K562 (cell line): ENCODE measurements at regions of chr17 and their contacts with region 1.

Region 1: DNA sequence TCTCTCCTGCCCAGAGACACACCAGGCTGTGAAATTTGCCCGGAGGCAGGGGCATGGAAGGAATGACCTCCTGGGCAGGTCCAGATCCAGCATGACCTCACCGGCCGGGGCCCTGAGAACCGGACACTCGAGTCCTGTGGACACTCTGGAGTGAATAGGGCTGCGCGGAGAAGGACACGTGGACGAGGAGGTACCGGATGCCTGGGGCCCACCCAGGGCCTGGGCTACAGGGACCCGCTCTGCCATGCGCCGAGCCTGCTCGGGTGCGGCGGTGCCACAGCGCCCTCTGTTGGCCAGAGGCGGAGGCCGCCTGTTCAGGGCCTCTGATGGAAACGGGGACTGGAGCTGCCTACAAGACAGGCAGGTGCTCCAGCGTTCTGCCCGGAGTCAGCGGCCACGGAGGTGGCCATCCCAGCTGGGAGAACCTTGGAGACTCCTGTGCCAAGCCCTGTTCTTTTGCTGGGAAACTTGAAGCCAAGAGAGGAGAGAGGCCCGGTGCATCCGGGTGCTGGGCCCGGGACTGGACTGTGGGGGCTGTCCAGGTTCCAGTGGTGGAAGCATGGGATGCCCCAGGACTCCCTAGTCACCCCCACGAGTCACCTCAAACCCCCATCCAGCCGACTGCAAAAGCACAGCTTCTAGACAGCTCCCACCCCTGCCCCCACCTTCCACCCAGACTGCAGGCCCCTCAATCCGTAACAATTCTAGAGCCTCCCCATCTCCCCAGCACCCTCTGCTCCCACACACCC is 19.3 kb upstream of the NXPH3 start:
- DNase-seq: peak; percentile 83 to 91 (median 90)
- ATAC-seq: peak; percentile 99
- H3K4me3 ChIP-seq: no peak overlapping the region
- H3K27ac ChIP-seq: no peak overlapping the region
- H3K4me1 ChIP-seq: peaks cover 0 to 14% of the 10 kb centered on the region in 2 experiments; a peak in 3 of 5 replicates
- H3K27me3 ChIP-seq: peaks cover 0 to 6% of the 10 kb centered on the region in 2 experiments; a peak in 2 of 5 replicates
- CTCF ChIP-seq: peak; percentile 96 to 97 (median 96)
- EP300 ChIP-seq: no peak
- POLR2A ChIP-seq: no peak
- RAD21 ChIP-seq: peak; percentile 83 to 97

Region 2: DNA sequence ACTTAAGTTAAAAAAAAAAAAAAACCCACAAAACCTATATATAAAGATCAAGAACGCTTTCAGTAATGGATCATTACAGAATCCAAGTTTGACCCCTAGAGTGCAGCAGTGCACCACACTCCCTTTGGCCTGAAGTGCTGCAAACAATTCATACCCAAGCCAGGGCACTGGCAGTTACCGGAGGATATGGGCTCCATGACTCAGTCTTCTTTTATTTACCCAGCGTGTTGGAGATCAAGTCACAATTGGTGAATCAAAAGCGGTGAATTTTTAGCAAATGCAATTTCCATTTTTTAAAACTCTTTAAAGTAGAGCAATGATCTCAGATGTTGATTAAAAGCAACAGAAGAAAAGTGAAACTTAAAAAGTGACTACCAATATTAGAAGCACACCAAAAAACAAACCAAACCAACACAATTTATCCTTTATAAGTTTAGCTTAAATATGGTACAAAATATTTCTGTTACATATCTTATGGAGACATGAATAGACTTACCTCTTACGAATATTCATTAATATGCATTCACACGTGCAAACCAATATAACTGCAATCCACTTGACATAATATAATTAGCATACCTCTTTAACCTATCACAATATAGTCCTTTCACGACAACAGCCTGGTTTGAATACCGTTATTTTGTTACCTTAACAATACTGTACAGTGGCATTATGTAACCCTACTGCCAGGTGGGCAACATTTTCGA is 240.7 kb before region 1 on chr17:
- CTCF ChIA-PET with region 1: interaction called, 11 read pairs
- POLR2A ChIA-PET with region 1: no interaction called
- in situ Hi-C with region 1: no loop called
- intact Hi-C with region 1: loop called (anchors 5 kb)
- DNase-seq: peak; percentile 58 to 75 (median 64)
- ATAC-seq: peak; percentile 93
- H3K4me3 ChIP-seq: no peak overlapping the region
- H3K27ac ChIP-seq: no peak overlapping the region
- H3K4me1 ChIP-seq: no peaks in the 10 kb centered on the region
- H3K27me3 ChIP-seq: no peaks in the 10 kb centered on the region
- CTCF ChIP-seq: peak; percentile 73 to 93 (median 80)
- EP300 ChIP-seq: 0 out of 2 replicates have a peak, but pooled peaks have one; percentile 3
- POLR2A ChIP-seq: no peak
- RAD21 ChIP-seq: peak; percentile 90 to 94

Region 3: DNA sequence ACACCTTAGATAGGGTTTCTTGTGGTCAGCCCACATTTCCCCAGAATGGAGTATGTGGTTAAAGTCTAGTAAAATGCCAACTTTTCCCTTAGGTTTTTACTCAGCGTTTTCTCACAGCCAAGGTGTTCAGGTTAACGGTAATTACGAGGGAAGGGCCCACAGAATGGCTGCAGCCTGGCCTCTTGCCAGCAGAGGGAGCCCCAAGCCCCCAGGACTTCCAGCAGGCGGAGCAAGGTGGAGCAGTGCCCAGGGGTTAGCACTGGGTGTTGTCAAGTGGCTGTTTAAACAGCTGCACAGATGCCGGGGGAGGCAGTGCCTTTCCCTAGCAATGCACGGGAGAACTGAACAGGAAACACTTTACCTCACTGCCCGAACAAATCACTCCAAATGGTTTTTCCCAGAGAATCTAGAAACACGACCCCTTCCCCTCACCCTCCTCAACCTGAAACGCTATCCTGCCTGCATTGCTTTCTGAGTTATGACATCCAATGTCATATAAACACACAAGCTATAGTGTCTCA is 148.4 kb before region 1 on chr17:
- CTCF ChIA-PET with region 1: interaction called, 29 read pairs
- POLR2A ChIA-PET with region 1: interaction called, 4 read pairs
- in situ Hi-C with region 1: loop called (anchors 5 kb)
- intact Hi-C with region 1: loop called (anchors 1 kb)
- DNase-seq: peak; percentile 81 to 85 (median 84)
- ATAC-seq: peak; percentile 100
- H3K4me3 ChIP-seq: no peak overlapping the region
- H3K27ac ChIP-seq: no peak overlapping the region
- H3K4me1 ChIP-seq: no peaks in the 10 kb centered on the region
- H3K27me3 ChIP-seq: no peaks in the 10 kb centered on the region
- CTCF ChIP-seq: peak; percentile 97 to 99 (median 98)
- EP300 ChIP-seq: no peak
- POLR2A ChIP-seq: no peak
- RAD21 ChIP-seq: peak; percentile 94 to 95

Region 4: DNA sequence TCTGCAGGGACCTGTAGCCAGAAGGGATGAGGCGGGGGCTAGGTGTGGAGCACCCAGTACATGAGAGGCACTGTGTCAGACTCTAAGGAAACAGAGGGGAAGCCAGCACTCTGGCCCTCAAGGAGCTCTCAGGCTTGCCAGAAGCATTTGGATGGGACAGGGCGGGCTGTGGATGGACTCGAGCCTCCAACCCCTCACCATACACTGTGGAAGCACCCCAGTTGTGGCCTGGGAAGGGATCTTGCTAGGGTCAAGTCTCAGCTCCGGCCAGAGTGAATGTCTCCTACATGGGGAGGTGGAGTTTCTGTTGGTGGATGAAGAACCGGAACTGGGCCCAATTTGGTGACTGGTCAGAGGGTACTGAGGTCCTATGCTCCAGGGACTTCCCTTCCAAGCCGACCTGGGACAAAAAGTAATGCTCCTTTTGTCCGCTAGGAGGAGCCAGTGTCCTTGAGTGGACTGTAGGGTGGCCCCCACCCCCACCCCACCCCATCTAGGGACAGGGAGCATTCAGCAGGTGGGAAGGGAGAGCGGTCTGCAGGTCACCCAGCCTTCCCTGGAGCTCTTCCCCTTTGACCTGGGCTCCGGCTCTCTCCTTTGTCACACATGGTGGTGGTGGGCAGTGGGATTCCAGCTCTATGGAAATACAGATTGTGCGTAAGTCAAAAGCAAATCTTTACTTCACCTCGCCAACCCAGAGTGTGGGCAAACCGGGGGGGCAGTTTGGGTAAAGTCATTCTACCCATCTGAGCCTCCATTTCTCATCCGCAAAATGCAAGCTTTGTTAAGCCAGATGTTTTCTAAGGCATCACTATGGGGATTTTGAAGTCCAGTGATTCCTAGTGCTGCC is 121.4 kb before region 1 on chr17:
- CTCF ChIA-PET with region 1: interaction called, 11 read pairs
- POLR2A ChIA-PET with region 1: interaction called, 4 read pairs
- in situ Hi-C with region 1: loop called (anchors 5 kb)
- intact Hi-C with region 1: no loop called
- DNase-seq: peak; percentile 82 to 96 (median 92)
- ATAC-seq: peak; percentile 98
- H3K4me3 ChIP-seq: no peak overlapping the region
- H3K27ac ChIP-seq: no peak overlapping the region
- H3K4me1 ChIP-seq: peaks cover 0 to 5% of the 10 kb centered on the region in 2 experiments; a peak in 1 of 5 replicates
- H3K27me3 ChIP-seq: peaks cover 21 to 42% of the 10 kb centered on the region in 2 experiments; a peak in 4 of 5 replicates
- CTCF ChIP-seq: peak; percentile 75 to 82 (median 80)
- EP300 ChIP-seq: no peak
- POLR2A ChIP-seq: no peak
- RAD21 ChIP-seq: peak; percentile 44 to 71

Region 5: GRCh38 chr17:49496183-49496866 is 60.1 kb before region 1 on chr17:
- CTCF ChIA-PET with region 1: interaction called, 10 read pairs
- POLR2A ChIA-PET with region 1: no interaction called
- in situ Hi-C with region 1: no loop called
- intact Hi-C with region 1: no loop called
- DNase-seq: peak; percentile 76 to 83 (median 80)
- ATAC-seq: peak; percentile 94
- H3K4me3 ChIP-seq: no peak overlapping the region
- H3K27ac ChIP-seq: no peak overlapping the region
- H3K4me1 ChIP-seq: peaks cover 0 to 31% of the 10 kb centered on the region in 2 experiments; a peak in 2 of 5 replicates
- H3K27me3 ChIP-seq: peaks cover 30 to 62% of the 10 kb centered on the region in 2 experiments
- CTCF ChIP-seq: peak; percentile 65 to 81 (median 67); a peak in 5 of 6 replicates
- EP300 ChIP-seq: no peak
- POLR2A ChIP-seq: no peak
- RAD21 ChIP-seq: peak; percentile 25 to 63; a peak in 3 of 4 replicates

Region 6: GRCh38 chr17:49694847-49695683 is 138.7 kb after region 1 on chr17:
- CTCF ChIA-PET with region 1: interaction called, 27 read pairs
- POLR2A ChIA-PET with region 1: interaction called, 4 read pairs
- in situ Hi-C with region 1: no loop called
- intact Hi-C with region 1: no loop called
- DNase-seq: peak; percentile 57 to 68 (median 60)
- ATAC-seq: peak; percentile 64
- H3K4me3 ChIP-seq: no peak overlapping the region
- H3K27ac ChIP-seq: no peak overlapping the region
- H3K4me1 ChIP-seq: peaks cover 0 to 4% of the 10 kb centered on the region in 2 experiments; a peak in 1 of 5 replicates
- H3K27me3 ChIP-seq: no peaks in the 10 kb centered on the region; a peak in 1 of 5 replicates
- CTCF ChIP-seq: peak; percentile 91 to 96 (median 92)
- EP300 ChIP-seq: no peak
- POLR2A ChIP-seq: no peak
- RAD21 ChIP-seq: peak; percentile 93 to 96